CD8-positive, alpha-beta memory T cell (primary cell): ENCODE measurements at regions of chr7 and their contacts with region 1.

Region 1: GRCh38 chr7:104883718-104884452 is 130.1 kb upstream of the KMT2E start:
- DNase-seq: peak; percentile 56 to 79 (median 66)
- H3K4me3 ChIP-seq: no peak overlapping the region
- H3K4me3 Mint-ChIP-seq: no peak overlapping the region
- H3K27ac ChIP-seq: no peak overlapping the region
- H3K27ac Mint-ChIP-seq: no peak overlapping the region
- H3K4me1 ChIP-seq: no peaks in the 10 kb centered on the region
- H3K4me1 Mint-ChIP-seq: peaks cover 1 to 7% (median 4%) of the 10 kb centered on the region in 3 donors
- H3K27me3 ChIP-seq: no peaks in the 10 kb centered on the region
- H3K27me3 Mint-ChIP-seq: peaks cover 4 to 6% of the 10 kb centered on the region in 2 donors

Region 2: DNA sequence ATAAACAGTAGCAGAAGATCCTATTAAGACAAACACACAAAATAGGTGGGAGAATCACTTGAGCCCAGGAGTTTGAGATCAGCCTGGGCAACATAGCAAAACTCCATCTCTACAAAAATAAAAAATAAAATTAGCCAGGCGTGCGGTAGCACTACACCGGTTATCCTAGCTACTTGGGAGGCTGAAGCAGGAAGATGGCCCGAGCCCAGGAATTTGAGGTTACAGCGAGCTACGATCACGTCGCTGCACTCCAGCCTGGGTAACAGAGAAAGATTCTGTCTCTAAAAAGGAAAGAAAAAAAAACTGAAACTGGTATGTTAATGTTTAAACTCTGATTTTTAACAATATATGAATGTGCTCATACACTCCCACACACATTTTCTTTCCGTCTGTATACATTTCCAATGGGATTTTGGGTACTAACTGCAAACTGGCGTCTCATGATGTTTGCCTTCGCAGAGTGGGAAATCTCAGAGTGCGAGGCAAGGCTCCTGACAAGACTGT is 10.5 kb before region 1 on chr7:
- CTCF ChIA-PET with region 1: interaction called, 21 read pairs
- POLR2A ChIA-PET with region 1: no interaction called
- DNase-seq: no peak
- H3K4me3 ChIP-seq: no peak overlapping the region
- H3K4me3 Mint-ChIP-seq: no peak overlapping the region
- H3K27ac ChIP-seq: no peak overlapping the region
- H3K27ac Mint-ChIP-seq: peak overlapping the region in 1 of 8 donors; percentile 63
- H3K4me1 ChIP-seq: no peaks in the 10 kb centered on the region
- H3K4me1 Mint-ChIP-seq: peaks cover 2 to 10% (median 2%) of the 10 kb centered on the region in 3 donors
- H3K27me3 ChIP-seq: no peaks in the 10 kb centered on the region
- H3K27me3 Mint-ChIP-seq: peaks cover 0 to 4% of the 10 kb centered on the region in 2 donors

Region 3: GRCh38 chr7:104895522-104896236 is 11.8 kb after region 1 on chr7:
- CTCF ChIA-PET with region 1: interaction called, 36 read pairs
- POLR2A ChIA-PET with region 1: no interaction called
- DNase-seq: no peak
- H3K4me3 ChIP-seq: no peak overlapping the region
- H3K4me3 Mint-ChIP-seq: no peak overlapping the region
- H3K27ac ChIP-seq: no peak overlapping the region
- H3K27ac Mint-ChIP-seq: no peak overlapping the region
- H3K4me1 ChIP-seq: no peaks in the 10 kb centered on the region
- H3K4me1 Mint-ChIP-seq: peaks cover 4 to 5% (median 4%) of the 10 kb centered on the region in 3 donors
- H3K27me3 ChIP-seq: no peaks in the 10 kb centered on the region
- H3K27me3 Mint-ChIP-seq: peaks cover 0 to 7% of the 10 kb centered on the region in 2 donors

Region 4: DNA sequence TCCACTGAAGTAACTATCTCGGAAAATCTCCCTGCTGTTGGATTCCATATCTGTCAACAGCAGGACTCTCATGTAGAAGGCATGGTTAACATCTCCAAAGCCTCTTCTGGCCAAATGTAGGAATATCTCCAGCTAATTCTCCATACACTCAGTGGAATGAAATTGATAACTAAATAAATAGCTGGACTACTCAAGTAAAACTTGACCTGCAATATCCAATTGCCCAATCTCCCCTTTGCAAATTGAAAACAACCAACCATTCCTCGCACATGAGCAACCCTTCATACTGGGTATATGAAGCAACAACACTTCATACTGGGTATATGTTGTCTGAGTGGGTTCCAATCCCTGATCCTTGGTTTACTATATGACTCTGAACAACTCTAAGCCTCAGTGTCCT is 24.8 kb after region 1 on chr7:
- CTCF ChIA-PET with region 1: interaction called, 158 read pairs
- POLR2A ChIA-PET with region 1: no interaction called
- DNase-seq: no peak
- H3K4me3 ChIP-seq: no peak overlapping the region
- H3K4me3 Mint-ChIP-seq: no peak overlapping the region
- H3K27ac ChIP-seq: no peak overlapping the region
- H3K27ac Mint-ChIP-seq: no peak overlapping the region
- H3K4me1 ChIP-seq: no peaks in the 10 kb centered on the region
- H3K4me1 Mint-ChIP-seq: no peaks in the 10 kb centered on the region
- H3K27me3 ChIP-seq: peaks cover 7% of the 10 kb centered on the region
- H3K27me3 Mint-ChIP-seq: peaks cover 1 to 30% of the 10 kb centered on the region in 2 donors

Region 5: GRCh38 chr7:104923010-104923421 is 39.1 kb after region 1 on chr7:
- CTCF ChIA-PET with region 1: interaction called, 158 read pairs
- POLR2A ChIA-PET with region 1: interaction called, 6 read pairs
- DNase-seq: peak; percentile 35 to 85 (median 61)
- H3K4me3 ChIP-seq: no peak overlapping the region
- H3K4me3 Mint-ChIP-seq: no peak overlapping the region
- H3K27ac ChIP-seq: no peak overlapping the region
- H3K27ac Mint-ChIP-seq: peak overlapping the region in 5 of 8 donors; percentile 24 to 70 (median 47)
- H3K4me1 ChIP-seq: peaks cover 5% of the 10 kb centered on the region
- H3K4me1 Mint-ChIP-seq: peaks cover 3 to 8% (median 4%) of the 10 kb centered on the region in 3 donors
- H3K27me3 ChIP-seq: no peaks in the 10 kb centered on the region
- H3K27me3 Mint-ChIP-seq: no peaks in the 10 kb centered on the region